Sigmoid colon (tissue), 7 donors: ENCODE measurements at regions of chr11 and their contacts with region 1.

Region 1: GRCh38 chr11:6481012-6481923 is at the starts of genes ARFIP2 and TIMM10B:
- DNase-seq: peak; percentile 99
- H3K4me3 ChIP-seq: peak within 1 kb of the TSS; percentile 67 to 84 (median 79)
- H3K27ac ChIP-seq: peak within 1 kb of the TSS; percentile 88 to 94 (median 91)
- H3K4me1 ChIP-seq: peaks cover 0 to 41% (median 29%) of the 10 kb centered on the region in 4 donors
- H3K27me3 ChIP-seq: no peaks in the 10 kb centered on the region
- CTCF ChIP-seq: no peak
- EP300 ChIP-seq: peak in 1 of 4 donors; percentile 83
- POLR2A ChIP-seq: peak; percentile 90 to 93
- total RNA-seq, gene ARFIP2: 33.9 to 37.2 (median 35.3) TPM
- total RNA-seq, gene TIMM10B: 24.9 to 47.4 (median 44.2) TPM

Region 2: DNA sequence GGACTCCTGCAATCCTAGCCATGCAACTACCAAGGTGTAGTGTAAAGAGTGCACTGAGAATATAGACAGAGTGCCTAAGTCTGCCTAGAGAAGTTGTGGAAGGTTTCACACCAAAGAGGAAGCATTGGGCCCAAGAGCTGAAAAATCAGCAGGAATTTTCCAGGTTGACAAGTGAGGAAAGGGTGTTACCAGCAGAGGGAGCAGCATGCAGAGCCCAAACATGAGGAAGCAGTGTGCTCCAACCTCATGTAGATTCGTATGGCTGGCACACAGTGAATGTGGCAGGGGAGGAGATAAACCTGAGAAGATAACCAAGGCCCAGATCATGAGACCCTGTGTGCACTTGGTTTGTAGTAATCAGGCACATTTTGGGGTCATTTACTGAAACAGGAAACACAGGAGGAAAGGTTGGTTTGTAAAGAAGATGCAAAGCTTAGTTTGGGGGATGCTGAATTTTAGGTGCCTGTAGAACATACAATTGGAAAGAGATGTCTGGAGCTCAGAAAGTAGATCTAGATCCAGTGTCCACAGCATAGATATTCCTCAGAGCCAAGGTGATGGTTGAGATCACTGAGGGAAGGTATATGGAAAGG is 42.2 kb before region 1 on chr11:
- intact Hi-C with region 1: no loop called
- DNase-seq: no peak
- H3K4me3 ChIP-seq: no peak overlapping the region
- H3K27ac ChIP-seq: no peak overlapping the region
- H3K4me1 ChIP-seq: no peaks in the 10 kb centered on the region
- H3K27me3 ChIP-seq: no peaks in the 10 kb centered on the region
- CTCF ChIP-seq: peak in 3 of 4 experiments; percentile 40 to 57 (median 52)
- EP300 ChIP-seq: no peak
- POLR2A ChIP-seq: no peak

Region 3: DNA sequence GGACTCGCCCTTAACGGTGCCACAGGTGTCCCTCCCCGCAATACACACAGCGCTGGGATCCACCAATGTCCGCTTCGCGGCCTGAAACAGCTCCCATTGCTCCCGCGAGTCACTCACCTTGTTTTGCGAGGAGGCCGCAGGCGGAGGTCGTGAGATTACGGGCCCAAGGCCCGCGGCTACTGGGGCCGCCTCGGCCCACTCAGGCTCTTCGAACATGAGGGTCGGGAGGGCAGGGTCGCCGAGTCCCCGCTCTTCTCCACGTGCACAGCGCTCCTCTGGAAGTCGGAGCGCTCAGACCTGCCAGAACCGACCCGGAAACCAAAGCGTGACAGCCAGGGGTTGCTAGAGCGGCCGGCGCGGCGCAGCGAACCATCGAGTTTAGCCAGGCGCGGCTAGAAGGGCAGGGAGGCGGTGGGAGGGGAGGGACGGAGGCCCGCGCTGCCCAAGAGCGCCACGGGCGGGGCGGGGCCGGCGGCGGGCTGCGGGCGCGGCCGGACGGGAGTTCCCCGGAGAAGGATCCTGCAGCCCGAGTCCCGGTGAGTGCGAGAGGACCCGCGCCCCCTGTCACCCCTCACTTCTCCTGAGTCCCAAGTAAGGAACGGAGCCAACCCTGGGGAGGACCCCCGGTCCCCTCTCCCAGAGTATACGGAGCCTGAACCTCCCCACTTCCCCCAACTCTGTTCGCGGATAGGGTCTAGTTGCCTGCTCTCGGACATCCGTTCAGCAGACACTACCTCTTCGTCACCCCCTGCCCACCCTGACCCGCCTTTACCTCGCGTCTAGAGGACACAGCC is 122.2 kb after region 1 on chr11 and contains the starts of genes ILK and RRP8:
- intact Hi-C with region 1: loop called (anchors 5 kb)
- DNase-seq: peak; percentile 96
- H3K4me3 ChIP-seq: peak within 1 kb of the TSS; percentile 76 to 95 (median 84)
- H3K27ac ChIP-seq: peak within 1 kb of the TSS; percentile 98 to 99 (median 98)
- H3K4me1 ChIP-seq: peaks cover 0 to 81% (median 63%) of the 10 kb centered on the region in 4 donors
- H3K27me3 ChIP-seq: no peaks in the 10 kb centered on the region
- CTCF ChIP-seq: no peak
- EP300 ChIP-seq: no peak
- POLR2A ChIP-seq: peak; percentile 73 to 86
- total RNA-seq, gene ILK: 450 to 607 (median 548) TPM
- total RNA-seq, gene RRP8: 20.7 to 23.2 (median 21.7) TPM

Region 4: DNA sequence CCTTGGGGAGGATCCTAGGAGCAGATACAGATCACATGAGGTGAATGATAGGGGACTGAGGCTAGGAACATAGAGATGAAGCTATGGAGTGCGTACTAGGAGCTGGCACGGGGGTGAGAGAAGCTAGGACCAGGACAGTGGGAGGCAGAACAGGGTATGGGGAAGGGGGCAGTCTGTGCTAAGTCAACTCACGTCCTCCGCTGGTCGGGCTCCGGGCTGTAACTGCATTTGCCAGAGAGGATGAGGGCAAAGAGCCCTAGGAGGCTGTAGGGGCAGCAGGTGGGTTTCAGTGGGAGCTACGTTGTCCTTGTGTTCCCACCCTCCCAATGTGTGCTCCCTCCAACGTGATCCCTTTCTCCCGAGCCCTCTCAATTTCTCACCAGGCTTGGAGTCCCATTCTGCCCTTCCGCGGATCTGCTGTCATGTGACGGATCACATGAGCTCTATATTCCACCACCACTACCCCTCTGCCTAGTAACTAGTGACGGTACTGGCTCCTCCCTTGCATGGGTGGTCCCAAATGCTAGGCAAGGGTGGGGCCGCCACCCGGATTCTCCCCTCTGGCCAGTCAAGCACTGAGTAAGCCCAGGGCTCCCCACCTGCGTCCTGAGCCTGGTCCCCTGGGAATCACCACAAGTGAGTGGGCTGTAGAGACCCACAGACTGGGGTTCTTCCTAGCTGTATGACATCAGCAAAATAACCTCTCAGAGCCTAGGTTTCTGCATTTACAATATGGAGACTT is 137.9 kb after region 1 on chr11 and contains the start of gene TPP1:
- intact Hi-C with region 1: loop called (anchors 2 kb)
- DNase-seq: peak; percentile 98
- H3K4me3 ChIP-seq: peak within 1 kb of the TSS; percentile 58 to 81 (median 68)
- H3K27ac ChIP-seq: peak within 1 kb of the TSS; percentile 85 to 98 (median 86)
- H3K4me1 ChIP-seq: peaks cover 0 to 24% (median 22%) of the 10 kb centered on the region in 4 donors
- H3K27me3 ChIP-seq: no peaks in the 10 kb centered on the region
- CTCF ChIP-seq: no peak
- EP300 ChIP-seq: peak in 1 of 4 donors; percentile 51
- POLR2A ChIP-seq: peak; percentile 84 to 86
- total RNA-seq, gene TPP1: 39.8 to 58.8 (median 45.9) TPM